AG04450 (cell line): ENCODE measurements at regions of chr1 and their contacts with region 1.

Region 1: DNA sequence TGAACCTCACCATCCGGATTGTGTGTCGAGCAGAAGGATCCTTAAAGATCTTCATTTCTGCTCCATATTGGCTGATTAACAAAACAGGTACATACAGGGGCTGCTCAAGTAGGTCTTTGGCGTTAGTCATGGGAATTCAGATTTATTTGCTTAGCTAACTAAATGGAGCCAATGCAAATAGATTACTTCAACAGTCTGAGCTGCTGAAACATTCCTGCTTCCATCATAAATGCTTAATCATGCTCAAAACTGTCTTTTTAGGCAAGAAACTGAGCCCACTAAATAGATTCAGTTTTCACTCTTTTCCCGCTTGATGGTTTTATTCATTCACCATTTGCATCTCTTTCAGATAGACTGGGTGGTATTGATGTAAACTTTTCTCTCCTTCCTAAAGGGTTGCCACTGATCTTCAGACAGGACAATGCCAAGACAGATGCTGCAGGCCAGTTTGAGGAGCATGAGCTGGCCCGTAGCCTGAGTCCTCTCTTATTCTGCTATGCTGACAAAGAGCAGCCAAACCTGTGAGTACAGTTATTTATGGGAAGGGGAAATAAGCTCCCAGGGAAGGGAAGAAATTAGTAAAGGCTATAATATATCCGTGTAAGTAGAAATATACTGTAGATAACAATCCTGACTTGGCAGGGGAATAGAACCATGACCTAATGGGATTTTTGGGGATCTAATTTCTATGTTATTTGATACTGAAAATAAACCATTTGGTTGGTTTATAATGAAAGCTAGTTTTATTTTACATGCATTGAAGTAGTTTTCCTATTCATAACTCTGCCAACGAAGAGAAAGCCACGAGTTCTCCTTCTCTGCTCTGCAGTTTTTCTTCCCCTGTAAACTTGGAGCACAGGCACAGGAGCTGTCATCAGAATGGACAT is 126.4 kb downstream of the VPS13D start:
- DNase-seq: no peak
- H3K4me3 ChIP-seq: no peak overlapping the region
- H3K27ac ChIP-seq: peak overlapping the region; percentile 83
- H3K27me3 ChIP-seq: no peaks in the 10 kb centered on the region
- CTCF ChIP-seq: no peak

Region 2: GRCh38 chr1:12326986-12327385 is 29.3 kb before region 1 on chr1:
- CTCF ChIA-PET with region 1: no interaction called
- POLR2A ChIA-PET with region 1: no interaction called
- DNase-seq: no peak
- H3K4me3 ChIP-seq: no peak overlapping the region
- H3K27ac ChIP-seq: no peak overlapping the region
- H3K27me3 ChIP-seq: no peaks in the 10 kb centered on the region
- CTCF ChIP-seq: no peak

Region 3: DNA sequence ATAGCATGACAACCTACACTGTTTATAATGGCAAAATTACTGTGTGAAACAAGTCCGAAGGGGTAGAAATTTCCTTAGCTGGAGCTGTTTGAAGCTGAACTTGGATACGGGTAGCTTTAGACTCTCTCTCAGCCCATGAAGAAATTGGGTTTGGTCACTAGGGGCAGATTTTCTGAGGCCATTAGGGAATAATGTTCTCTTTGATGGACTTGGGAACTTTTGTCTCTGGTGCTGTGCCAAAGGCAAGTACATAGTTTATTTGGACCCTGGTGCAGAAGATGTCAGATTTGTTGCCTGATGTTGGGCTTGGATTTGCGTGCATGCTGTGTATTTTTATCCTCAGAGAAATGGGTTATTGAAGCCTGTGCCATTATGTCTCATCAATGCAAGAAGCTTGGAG is 16.9 kb before region 1 on chr1:
- CTCF ChIA-PET with region 1: interaction called, 12 read pairs
- POLR2A ChIA-PET with region 1: no interaction called
- DNase-seq: no peak
- H3K4me3 ChIP-seq: no peak overlapping the region
- H3K27ac ChIP-seq: no peak overlapping the region
- H3K27me3 ChIP-seq: no peaks in the 10 kb centered on the region
- CTCF ChIP-seq: peak; percentile 42